GM18951 (cell line): ENCODE measurements at regions of chrX and their contacts with region 1.

Region 1: DNA sequence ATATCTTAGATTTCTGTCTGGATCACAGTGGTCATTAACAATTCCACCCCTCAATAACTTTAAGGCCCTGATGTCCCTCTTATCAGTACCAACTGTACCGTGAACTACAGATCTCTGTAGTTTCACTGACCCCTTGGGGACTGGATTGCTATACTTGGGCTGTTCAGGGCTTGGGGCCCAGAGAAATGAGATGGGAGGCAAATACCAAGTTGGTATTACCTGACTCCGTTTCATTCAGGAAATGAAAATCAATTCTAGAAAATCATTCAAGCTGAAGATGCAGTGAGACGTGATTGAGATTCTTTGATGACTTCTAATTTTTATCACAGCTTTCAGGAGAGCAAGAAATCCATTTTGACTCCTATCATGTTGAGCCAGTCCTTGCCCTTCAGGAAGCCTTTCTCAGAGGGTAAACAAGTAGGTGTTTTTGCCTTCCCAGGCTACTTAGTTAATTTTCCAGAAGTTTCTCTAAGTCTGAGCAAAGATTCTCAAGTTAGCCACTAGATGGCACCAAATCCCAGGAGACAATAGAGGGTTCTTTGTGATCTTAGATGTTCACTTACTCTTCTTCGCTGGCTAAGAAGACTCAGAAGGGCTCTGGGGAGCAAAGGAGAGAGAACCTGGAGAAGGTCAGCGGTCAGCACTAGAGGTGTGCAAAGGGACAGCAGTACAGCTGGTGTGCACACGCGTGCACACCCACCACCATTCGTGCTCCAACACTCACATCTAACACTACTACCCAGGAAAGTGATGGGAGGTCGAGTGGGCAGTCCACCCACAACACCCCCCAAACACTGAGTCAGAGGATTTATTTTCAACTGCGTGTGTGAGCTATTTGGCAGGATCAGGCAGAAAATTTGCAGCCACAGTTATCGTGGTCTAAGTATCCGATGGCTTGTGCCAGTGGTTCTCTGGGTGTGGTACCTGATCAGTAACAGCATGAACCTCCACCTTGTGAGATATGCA is 7.4 kb downstream of the HNRNPH2 start:
- POLR2A ChIP-seq: no peak

Region 2: GRCh38 chrX:101799387-101799786 is 383.9 kb after region 1 on chrX:
- in situ Hi-C with region 1: loop called (anchors 10 kb)
- POLR2A ChIP-seq: no peak